Panc1 (cell line): ENCODE measurements at regions of chr16 and their contacts with region 1.

Region 1: GRCh38 chr16:26363581-26363980 is 671.8 kb downstream of the HS3ST4 start:
- DNase-seq: no peak
- ATAC-seq: no peak
- H3K4me3 ChIP-seq: no peak overlapping the region
- H3K27ac ChIP-seq: no peak overlapping the region
- H3K4me1 ChIP-seq: no peaks in the 10 kb centered on the region
- H3K27me3 ChIP-seq: 0 out of 2 replicates have a peak, but pooled peaks cover 2% of the 10 kb centered on the region
- CTCF ChIP-seq: no peak

Region 2: GRCh38 chr16:26374279-26374925 is 10.8 kb after region 1 on chr16:
- CTCF ChIA-PET with region 1: no interaction called
- POLR2A ChIA-PET with region 1: no interaction called
- in situ Hi-C with region 1: no loop called
- intact Hi-C with region 1: loop called (anchors 1 kb)
- DNase-seq: no peak
- ATAC-seq: no peak
- H3K4me3 ChIP-seq: no peak overlapping the region
- H3K27ac ChIP-seq: no peak overlapping the region
- H3K4me1 ChIP-seq: no peaks in the 10 kb centered on the region
- H3K27me3 ChIP-seq: no peaks in the 10 kb centered on the region
- CTCF ChIP-seq: no peak

Region 3: GRCh38 chr16:26816266-26816665 is 452.7 kb after region 1 on chr16:
- CTCF ChIA-PET with region 1: no interaction called
- POLR2A ChIA-PET with region 1: no interaction called
- in situ Hi-C with region 1: no loop called
- intact Hi-C with region 1: no loop called
- DNase-seq: no peak
- ATAC-seq: 0 out of 2 replicates have a peak, but pooled peaks have one; percentile 20
- H3K4me3 ChIP-seq: no peak overlapping the region
- H3K27ac ChIP-seq: no peak overlapping the region
- H3K4me1 ChIP-seq: no peaks in the 10 kb centered on the region
- H3K27me3 ChIP-seq: peaks cover 2% of the 10 kb centered on the region; the same call in 1 of the 2 replicates
- CTCF ChIP-seq: no peak